ENCODE measurements at regions of chr10 and their contacts with region 1.

Region 1: GRCh38 chr10:88901206-88901983 is 21.4 kb downstream of the STAMBPL1 start:
- DNase-seq: no peak
- H3K4me3 Mint-ChIP-seq: peak overlapping the region; percentile 51
- H3K27ac Mint-ChIP-seq: peak overlapping the region; percentile 87
- H3K4me1 Mint-ChIP-seq: peaks cover 60% of the 10 kb centered on the region
- H3K27me3 Mint-ChIP-seq: no peaks in the 10 kb centered on the region

Region 2: DNA sequence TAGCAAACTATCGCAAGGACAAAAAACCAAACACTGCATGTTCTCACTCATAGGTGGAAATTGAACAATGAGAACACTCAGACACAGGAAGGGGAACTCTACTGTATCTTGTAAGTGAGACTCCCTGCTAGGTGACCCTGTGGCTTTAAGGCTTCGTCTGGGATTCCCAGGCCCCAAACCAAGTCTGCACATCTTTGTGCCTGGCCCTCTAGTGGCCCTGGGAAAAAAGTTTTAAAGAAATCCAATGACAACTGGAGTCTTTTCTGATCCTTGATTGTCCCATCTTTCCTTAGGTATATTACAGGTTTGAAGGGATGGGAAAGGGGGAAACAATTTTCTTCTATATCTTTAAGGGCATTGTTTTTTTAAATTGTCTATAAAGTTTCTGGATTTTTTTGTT is 109.5 kb before region 1 on chr10:
- intact Hi-C with region 1: no loop called
- DNase-seq: no peak
- H3K4me3 Mint-ChIP-seq: no peak overlapping the region
- H3K27ac Mint-ChIP-seq: no peak overlapping the region
- H3K4me1 Mint-ChIP-seq: peaks cover 31% of the 10 kb centered on the region
- H3K27me3 Mint-ChIP-seq: peaks cover 20% of the 10 kb centered on the region

Region 3: DNA sequence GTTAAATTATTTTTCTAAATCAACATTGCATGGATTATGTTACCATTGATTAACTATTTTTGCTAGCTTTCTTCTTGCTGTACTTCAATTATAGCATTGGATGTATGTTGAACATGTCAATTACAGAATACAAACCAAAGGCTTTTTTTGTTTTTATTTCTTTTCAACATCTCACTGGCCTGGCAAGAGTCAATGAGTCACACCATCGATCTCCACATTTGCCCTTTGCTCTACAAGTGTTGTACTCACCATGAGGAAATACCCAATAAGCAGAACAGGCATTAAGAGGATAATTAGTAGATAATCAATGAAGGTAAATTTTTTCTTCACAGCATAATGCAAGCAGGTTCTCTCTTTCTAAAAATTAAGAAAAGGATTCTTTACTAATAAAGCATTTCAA is 73.1 kb before region 1 on chr10:
- intact Hi-C with region 1: loop called (anchors 2 kb)
- DNase-seq: no peak
- H3K4me3 Mint-ChIP-seq: no peak overlapping the region
- H3K27ac Mint-ChIP-seq: peak overlapping the region; percentile 21
- H3K4me1 Mint-ChIP-seq: peaks cover 72% of the 10 kb centered on the region
- H3K27me3 Mint-ChIP-seq: no peaks in the 10 kb centered on the region

Region 4: DNA sequence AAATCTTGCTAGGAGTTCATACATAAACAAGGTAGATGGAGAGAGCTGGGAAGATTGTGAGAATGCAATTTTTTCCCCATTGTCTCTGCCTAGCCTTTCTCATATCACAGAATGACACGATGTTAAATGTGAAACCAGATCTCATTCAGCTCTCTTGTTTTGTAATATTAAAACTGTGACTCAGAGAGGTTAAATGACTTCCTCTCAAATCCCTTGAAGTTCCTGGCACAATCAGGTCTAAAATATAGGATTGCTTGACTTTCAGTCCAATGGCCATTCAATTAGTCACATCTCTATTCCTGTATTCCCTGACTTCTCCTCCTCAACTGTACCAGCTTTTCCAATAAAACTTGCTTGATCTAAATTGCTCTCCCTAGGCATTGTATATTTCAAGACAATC is 52.9 kb before region 1 on chr10:
- intact Hi-C with region 1: loop called (anchors 1 kb)
- DNase-seq: no peak
- H3K4me3 Mint-ChIP-seq: no peak overlapping the region
- H3K27ac Mint-ChIP-seq: peak overlapping the region; percentile 60
- H3K4me1 Mint-ChIP-seq: peaks cover 27% of the 10 kb centered on the region
- H3K27me3 Mint-ChIP-seq: peaks cover 4% of the 10 kb centered on the region

Region 5: GRCh38 chr10:88974446-88975376 is 73.3 kb after region 1 on chr10:
- intact Hi-C with region 1: no loop called
- DNase-seq: no peak
- H3K4me3 Mint-ChIP-seq: peak overlapping the region; percentile 99
- H3K27ac Mint-ChIP-seq: peak overlapping the region; percentile 97
- H3K4me1 Mint-ChIP-seq: peaks cover 22% of the 10 kb centered on the region
- H3K27me3 Mint-ChIP-seq: no peaks in the 10 kb centered on the region

Region 6: DNA sequence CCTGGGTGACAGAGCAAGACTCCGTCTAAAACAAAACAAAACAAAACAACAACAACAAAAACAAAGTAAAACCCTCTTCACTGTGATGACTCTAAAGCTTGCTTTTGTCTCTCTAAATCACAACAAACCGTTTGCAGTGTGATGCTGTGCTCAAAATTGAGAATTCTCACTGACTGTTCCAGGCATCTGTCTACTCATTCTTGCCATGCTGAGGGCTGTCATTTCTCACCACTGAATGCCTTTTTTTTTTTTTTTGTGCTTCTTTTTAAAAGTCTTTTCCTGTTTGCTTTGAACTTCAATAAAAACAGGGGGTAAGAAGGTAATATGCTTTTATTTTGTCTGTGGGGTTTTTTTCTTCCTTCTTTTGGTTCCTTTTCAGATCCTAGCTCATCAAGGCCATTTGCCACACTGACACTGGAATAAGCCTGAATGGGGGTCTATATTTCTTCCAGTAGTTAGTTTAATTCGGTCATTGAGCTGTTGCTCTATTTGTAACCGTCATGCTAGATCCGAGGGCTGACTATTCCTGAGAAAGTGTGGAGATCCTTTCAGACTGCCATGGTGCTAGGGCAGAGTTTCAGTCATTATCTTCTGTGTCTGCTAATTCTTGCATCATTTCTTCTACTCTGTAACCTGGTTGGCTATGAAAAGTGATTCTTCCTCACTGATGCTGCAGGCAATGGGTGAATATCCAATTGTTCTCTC is 99.8 kb after region 1 on chr10:
- intact Hi-C with region 1: loop called (anchors 2 kb)
- DNase-seq: no peak
- H3K4me3 Mint-ChIP-seq: peak overlapping the region; percentile 58
- H3K27ac Mint-ChIP-seq: peak overlapping the region; percentile 66
- H3K4me1 Mint-ChIP-seq: peaks cover 65% of the 10 kb centered on the region
- H3K27me3 Mint-ChIP-seq: no peaks in the 10 kb centered on the region